Heart left ventricle (tissue), 16 donors: ENCODE measurements at regions of chr5 and their contacts with region 1.

Region 1: DNA sequence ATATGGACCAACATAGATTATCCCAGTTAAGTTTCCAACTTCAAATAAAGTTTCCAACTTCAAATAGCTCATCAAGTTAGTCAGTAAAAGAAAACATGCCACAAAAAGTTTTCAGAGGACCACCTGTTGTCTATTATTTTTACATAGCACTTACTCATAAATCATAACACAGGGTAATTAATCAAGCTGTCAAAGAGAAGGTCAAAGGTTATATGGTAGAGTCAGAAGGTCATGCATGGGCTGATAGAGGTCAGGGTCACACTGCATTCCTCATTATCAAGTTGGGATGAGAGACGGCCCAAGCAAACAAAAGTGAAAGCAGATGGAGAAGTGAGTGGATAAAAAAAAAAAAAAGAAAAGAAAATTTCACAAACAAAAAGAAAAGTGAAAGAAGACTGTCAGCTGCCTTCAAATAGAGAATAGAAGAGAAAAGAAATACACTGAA is 145.5 kb upstream of the POU5F2 start:
- DNase-seq: no peak
- ATAC-seq: no peak
- H3K4me3 ChIP-seq: peak overlapping the region in 2 of 12 donors; percentile 8 to 9
- H3K27ac ChIP-seq: no peak overlapping the region
- H3K4me1 ChIP-seq: peaks cover 0 to 12% (median 0%) of the 10 kb centered on the region in 12 donors
- H3K27me3 ChIP-seq: no peaks in the 10 kb centered on the region
- CTCF ChIP-seq: no peak
- POLR2A ChIP-seq: no peak

Region 2: GRCh38 chr5:92492908-92493307 is 1394.0 kb before region 1 on chr5:
- intact Hi-C with region 1: no loop called
- DNase-seq: no peak
- ATAC-seq: no peak
- H3K4me3 ChIP-seq: no peak overlapping the region
- H3K27ac ChIP-seq: no peak overlapping the region
- H3K4me1 ChIP-seq: no peaks in the 10 kb centered on the region
- H3K27me3 ChIP-seq: no peaks in the 10 kb centered on the region
- CTCF ChIP-seq: no peak
- POLR2A ChIP-seq: no peak

Region 3: GRCh38 chr5:93596676-93597461 is 290.1 kb before region 1 on chr5:
- intact Hi-C with region 1: loop called in 2 of 10 experiments (anchors 10 kb)
- DNase-seq: no peak
- ATAC-seq: peak in 1 of 4 donors; percentile 29
- H3K4me3 ChIP-seq: peak overlapping the region in 1 of 12 donors; percentile 7
- H3K27ac ChIP-seq: no peak overlapping the region
- H3K4me1 ChIP-seq: peaks cover 0 to 11% (median 0%) of the 10 kb centered on the region in 12 donors
- H3K27me3 ChIP-seq: peaks cover 46 to 98% (median 91%) of the 10 kb centered on the region in 9 donors
- CTCF ChIP-seq: no peak
- POLR2A ChIP-seq: no peak

Region 4: GRCh38 chr5:94066437-94067207 is 179.7 kb after region 1 on chr5:
- intact Hi-C with region 1: no loop called
- DNase-seq: no peak
- ATAC-seq: no peak
- H3K4me3 ChIP-seq: no peak overlapping the region
- H3K27ac ChIP-seq: no peak overlapping the region
- H3K4me1 ChIP-seq: no peaks in the 10 kb centered on the region
- H3K27me3 ChIP-seq: no peaks in the 10 kb centered on the region
- CTCF ChIP-seq: no peak
- POLR2A ChIP-seq: no peak